CD8-positive, alpha-beta T cell (primary cell): ENCODE measurements at regions of chr17 and their contacts with region 1.

Region 1: DNA sequence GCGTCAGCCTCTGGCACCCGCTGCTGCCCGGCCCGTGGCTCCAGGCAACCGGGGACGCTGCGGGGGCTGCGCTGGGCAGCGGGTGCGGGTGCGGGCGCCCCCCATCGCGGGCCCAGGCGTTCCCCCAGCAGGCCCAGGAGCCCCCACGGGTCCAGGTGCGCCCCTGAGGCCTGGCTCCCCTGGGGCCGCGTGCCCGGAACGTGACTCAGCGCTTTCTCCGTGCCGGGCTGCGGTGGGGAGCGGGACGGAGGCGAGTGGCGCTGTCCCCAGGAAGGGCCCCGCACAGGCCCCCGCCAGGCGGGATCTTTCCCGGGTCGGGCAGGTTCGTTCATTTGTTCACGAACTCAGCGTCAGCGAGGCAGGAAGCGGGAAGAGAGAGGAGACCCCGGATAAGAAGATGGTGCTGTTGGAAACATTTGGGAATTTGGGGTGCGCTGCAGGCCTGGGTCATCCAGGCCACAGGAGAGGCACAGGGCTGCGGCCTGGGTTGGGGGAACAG is 18.4 kb upstream of the EXOC7 start:
- DNase-seq: peak in 3 of 9 experiments; percentile 23 to 63 (median 48)
- ATAC-seq: peak; percentile 10
- H3K4me3 ChIP-seq: peak overlapping the region; percentile 47 to 49
- H3K4me3 Mint-ChIP-seq: peak overlapping the region; percentile 37
- H3K27ac ChIP-seq: peak overlapping the region in 1 of 2 experiments; percentile 27
- H3K27ac Mint-ChIP-seq: no peak overlapping the region
- H3K4me1 ChIP-seq: peaks cover 33% of the 10 kb centered on the region
- H3K4me1 Mint-ChIP-seq: peaks cover 20% of the 10 kb centered on the region
- H3K27me3 ChIP-seq: no peaks in the 10 kb centered on the region
- H3K27me3 Mint-ChIP-seq: no peaks in the 10 kb centered on the region
- CTCF ChIP-seq: no peak

Region 2: DNA sequence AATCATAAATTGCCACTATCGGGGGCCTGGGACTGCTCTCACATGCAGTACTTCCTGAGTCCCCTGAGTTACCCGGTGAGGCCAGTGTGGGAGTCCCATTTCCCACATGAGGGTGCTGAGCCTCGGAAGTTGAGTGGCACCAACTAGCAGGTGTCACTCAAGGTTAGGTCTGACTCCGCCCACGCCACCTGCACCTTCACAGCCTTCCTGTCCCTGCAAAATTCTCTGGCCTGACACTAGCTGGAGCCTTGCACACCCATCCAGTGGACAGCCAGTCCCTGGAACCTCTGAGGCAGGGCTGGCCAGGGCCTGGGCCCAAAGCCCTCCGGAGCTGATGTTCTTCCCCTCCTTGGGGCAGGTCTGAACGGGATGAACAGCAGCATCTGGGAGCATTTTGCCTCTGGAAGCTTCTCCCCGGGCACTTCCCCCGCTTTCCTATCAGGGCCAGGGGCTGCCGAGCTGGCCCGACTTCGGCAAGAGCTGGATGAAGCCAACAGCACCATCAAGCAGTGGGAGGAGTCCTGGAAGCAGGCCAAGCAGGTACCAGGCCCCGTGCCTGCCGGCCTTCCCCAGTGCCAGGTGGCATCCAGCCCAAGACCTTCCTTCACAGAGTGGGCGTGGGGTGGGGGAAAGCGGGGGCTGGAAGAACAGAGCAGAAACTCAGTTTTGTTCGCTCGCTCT is 299.7 kb before region 1 on chr17:
- CTCF ChIA-PET with region 1: no interaction called
- POLR2A ChIA-PET with region 1: no interaction called
- intact Hi-C with region 1: no loop called
- DNase-seq: peak in 8 of 9 experiments; percentile 17 to 68 (median 52)
- ATAC-seq: peak; percentile 90
- H3K4me3 ChIP-seq: no peak overlapping the region
- H3K4me3 Mint-ChIP-seq: peak overlapping the region; percentile 31
- H3K27ac ChIP-seq: peak overlapping the region; percentile 8 to 53
- H3K27ac Mint-ChIP-seq: peak overlapping the region; percentile 83
- H3K4me1 ChIP-seq: peaks cover 27% of the 10 kb centered on the region
- H3K4me1 Mint-ChIP-seq: peaks cover 24% of the 10 kb centered on the region
- H3K27me3 ChIP-seq: no peaks in the 10 kb centered on the region
- H3K27me3 Mint-ChIP-seq: no peaks in the 10 kb centered on the region
- CTCF ChIP-seq: no peak

Region 3: DNA sequence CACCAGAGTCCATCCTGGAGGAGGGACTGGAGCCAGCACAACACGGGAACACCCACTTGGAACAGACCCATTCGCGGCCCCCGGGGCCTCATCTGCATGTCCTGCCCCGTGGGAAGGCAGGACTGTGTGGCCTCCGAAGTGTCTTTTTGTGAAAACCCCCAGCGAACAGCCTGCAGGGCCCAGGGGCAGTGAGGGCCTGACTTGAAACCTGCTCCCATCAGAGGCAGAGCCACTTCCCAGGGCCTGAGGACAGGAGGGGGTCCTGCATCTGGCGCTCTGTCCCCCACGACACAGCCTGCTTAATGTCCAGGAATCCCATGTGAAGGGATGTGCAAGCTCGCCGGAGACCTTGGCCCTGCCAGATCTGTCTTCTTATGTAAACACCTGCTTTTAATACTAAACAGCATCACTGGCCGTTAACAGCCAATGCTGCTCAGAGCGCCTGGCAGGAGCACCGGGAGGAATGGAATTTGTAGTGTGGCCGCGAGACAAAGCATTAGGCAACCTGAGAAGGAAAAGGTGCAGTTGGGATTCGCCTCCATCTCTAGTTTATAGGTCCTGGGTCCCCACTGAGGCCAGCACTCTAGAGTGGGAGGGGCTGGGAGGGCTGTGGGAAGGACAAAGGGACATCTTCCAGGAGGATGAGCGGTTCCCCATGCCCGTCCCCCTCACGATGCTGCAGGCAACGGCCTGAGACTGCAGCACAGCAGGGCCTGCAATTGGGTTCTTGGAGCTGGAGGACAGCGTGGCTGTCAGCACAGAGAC is 85.3 kb before region 1 on chr17:
- CTCF ChIA-PET with region 1: no interaction called
- POLR2A ChIA-PET with region 1: no interaction called
- intact Hi-C with region 1: no loop called
- DNase-seq: no peak
- ATAC-seq: no peak
- H3K4me3 ChIP-seq: no peak overlapping the region
- H3K4me3 Mint-ChIP-seq: no peak overlapping the region
- H3K27ac ChIP-seq: no peak overlapping the region
- H3K27ac Mint-ChIP-seq: peak overlapping the region; percentile 37
- H3K4me1 ChIP-seq: peaks cover 16% of the 10 kb centered on the region
- H3K4me1 Mint-ChIP-seq: peaks cover 27% of the 10 kb centered on the region
- H3K27me3 ChIP-seq: no peaks in the 10 kb centered on the region
- H3K27me3 Mint-ChIP-seq: no peaks in the 10 kb centered on the region
- CTCF ChIP-seq: no peak

Region 4: DNA sequence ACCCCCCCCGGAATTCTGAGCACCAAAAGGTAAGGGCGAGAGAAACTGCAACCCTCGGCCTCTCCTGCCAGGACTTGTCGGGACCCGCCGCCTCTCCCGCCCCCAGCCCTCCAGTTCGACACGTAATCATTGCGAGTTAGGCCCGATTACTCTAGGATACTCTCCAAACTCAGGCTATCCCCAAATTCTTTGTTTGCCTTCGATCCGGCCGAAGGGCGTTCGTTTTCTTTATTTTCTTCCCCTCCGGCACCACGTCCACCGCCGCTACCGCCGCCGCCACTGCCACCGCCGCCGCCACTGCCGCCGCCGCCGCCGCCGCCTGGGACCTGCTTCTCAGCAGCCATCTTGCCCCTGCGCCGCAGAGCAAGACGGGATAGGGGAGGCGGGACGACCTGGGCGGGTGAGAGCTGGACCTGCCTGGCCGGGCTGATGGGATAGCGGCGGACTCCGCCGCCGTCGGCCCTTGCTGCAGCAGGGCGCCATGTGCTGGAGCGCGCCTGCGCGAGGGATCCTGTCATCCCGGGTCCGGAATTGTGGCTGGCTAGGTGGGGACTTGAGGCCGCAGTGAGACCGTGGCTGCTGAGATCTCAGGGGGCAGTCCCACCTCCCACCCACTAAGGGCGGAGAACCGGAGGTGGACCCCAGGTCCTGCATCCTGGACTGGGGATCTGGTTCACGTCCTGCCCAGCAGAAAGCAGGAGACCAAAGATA is 49.7 kb before region 1 on chr17 and contains the start of gene SRP68:
- CTCF ChIA-PET with region 1: no interaction called
- POLR2A ChIA-PET with region 1: no interaction called
- intact Hi-C with region 1: no loop called
- DNase-seq: peak; percentile 63 to 91 (median 83)
- ATAC-seq: peak; percentile 82
- H3K4me3 ChIP-seq: peak within 1 kb of the TSS; percentile 86 to 98
- H3K4me3 Mint-ChIP-seq: peak within 1 kb of the TSS; percentile 96
- H3K27ac ChIP-seq: peak within 1 kb of the TSS; percentile 77 to 81
- H3K27ac Mint-ChIP-seq: peak within 1 kb of the TSS; percentile 95
- H3K4me1 ChIP-seq: peaks cover 44% of the 10 kb centered on the region
- H3K4me1 Mint-ChIP-seq: peaks cover 53% of the 10 kb centered on the region
- H3K27me3 ChIP-seq: peaks cover 18 to 28% of the 10 kb centered on the region in 2 experiments
- H3K27me3 Mint-ChIP-seq: peaks cover 19% of the 10 kb centered on the region
- CTCF ChIP-seq: no peak
- total RNA-seq, gene SRP68: 93.6 to 99.9 TPM

Region 5: GRCh38 chr17:76132574-76133338 is 10.8 kb after region 1 on chr17:
- CTCF ChIA-PET with region 1: interaction called, 13 read pairs
- POLR2A ChIA-PET with region 1: interaction called, 4 read pairs
- intact Hi-C with region 1: no loop called
- DNase-seq: no peak
- ATAC-seq: no peak
- H3K4me3 ChIP-seq: no peak overlapping the region
- H3K4me3 Mint-ChIP-seq: no peak overlapping the region
- H3K27ac ChIP-seq: no peak overlapping the region
- H3K27ac Mint-ChIP-seq: no peak overlapping the region
- H3K4me1 ChIP-seq: peaks cover 27% of the 10 kb centered on the region
- H3K4me1 Mint-ChIP-seq: peaks cover 29% of the 10 kb centered on the region
- H3K27me3 ChIP-seq: no peaks in the 10 kb centered on the region
- H3K27me3 Mint-ChIP-seq: no peaks in the 10 kb centered on the region
- CTCF ChIP-seq: no peak

Region 6: DNA sequence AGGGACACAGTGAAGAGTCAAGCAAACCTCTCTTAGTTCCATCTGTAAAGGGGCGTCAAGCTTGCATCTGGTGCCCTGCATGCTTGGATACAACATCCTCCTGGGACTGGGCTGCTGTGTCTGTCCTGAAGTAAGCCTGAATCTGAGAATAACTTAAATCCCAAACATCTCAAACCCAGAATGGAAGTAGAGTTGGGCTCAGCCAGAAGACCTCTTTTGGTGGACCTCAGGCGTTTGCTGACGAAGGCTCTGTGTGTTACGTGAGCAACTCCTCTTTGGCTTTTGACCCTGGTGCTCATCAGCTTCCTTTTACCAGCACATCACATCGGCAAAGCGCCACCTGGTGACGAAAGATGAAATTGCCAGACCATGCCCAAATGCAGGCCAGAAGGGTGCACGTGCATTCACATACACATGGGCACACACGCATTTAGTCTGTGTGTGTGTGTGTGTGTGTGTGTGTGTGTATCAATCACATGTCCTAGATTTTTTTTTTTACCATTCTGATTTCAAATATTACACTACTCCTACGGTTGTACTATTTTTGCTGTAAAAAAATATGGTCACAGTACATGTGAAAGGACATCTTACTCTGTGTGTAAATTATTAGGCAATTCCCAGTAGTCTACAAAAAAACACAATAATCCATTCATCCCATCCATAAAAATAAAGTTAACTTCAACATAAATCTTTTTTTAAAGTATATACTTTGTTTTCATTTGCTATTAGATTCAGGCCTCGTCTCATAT is 60.2 kb after region 1 on chr17:
- CTCF ChIA-PET with region 1: interaction called, 177 read pairs
- POLR2A ChIA-PET with region 1: interaction called, 19 read pairs
- intact Hi-C with region 1: loop called (anchors 1 kb)
- DNase-seq: peak; percentile 90 to 98 (median 93)
- ATAC-seq: peak; percentile 77
- H3K4me3 ChIP-seq: no peak overlapping the region
- H3K4me3 Mint-ChIP-seq: peak overlapping the region; percentile 64
- H3K27ac ChIP-seq: peak overlapping the region; percentile 42 to 46
- H3K27ac Mint-ChIP-seq: peak overlapping the region; percentile 95
- H3K4me1 ChIP-seq: peaks cover 73% of the 10 kb centered on the region
- H3K4me1 Mint-ChIP-seq: peaks cover 65% of the 10 kb centered on the region
- H3K27me3 ChIP-seq: no peaks in the 10 kb centered on the region
- H3K27me3 Mint-ChIP-seq: no peaks in the 10 kb centered on the region
- CTCF ChIP-seq: peak; percentile 69

Region 7: GRCh38 chr17:76240461-76241203 is 118.7 kb after region 1 on chr17 and contains the start of gene RNF157:
- CTCF ChIA-PET with region 1: interaction called, 5 read pairs
- POLR2A ChIA-PET with region 1: interaction called, 4 read pairs
- intact Hi-C with region 1: loop called in 1 of 2 experiments (anchors 5 kb)
- DNase-seq: peak in 8 of 9 experiments; percentile 48 to 87 (median 64)
- ATAC-seq: peak; percentile 88
- H3K4me3 ChIP-seq: peak within 1 kb of the TSS; percentile 61 to 77
- H3K4me3 Mint-ChIP-seq: peak within 1 kb of the TSS; percentile 87
- H3K27ac ChIP-seq: peak within 1 kb of the TSS; percentile 49 to 63
- H3K27ac Mint-ChIP-seq: peak within 1 kb of the TSS; percentile 91
- H3K4me1 ChIP-seq: peaks cover 52% of the 10 kb centered on the region
- H3K4me1 Mint-ChIP-seq: peaks cover 54% of the 10 kb centered on the region
- H3K27me3 ChIP-seq: no peaks in the 10 kb centered on the region
- H3K27me3 Mint-ChIP-seq: no peaks in the 10 kb centered on the region
- CTCF ChIP-seq: no peak
- total RNA-seq, gene RNF157: 22.3 to 25.5 TPM

Region 8: GRCh38 chr17:76296186-76296585 is 174.2 kb after region 1 on chr17:
- CTCF ChIA-PET with region 1: interaction called, 17 read pairs
- POLR2A ChIA-PET with region 1: no interaction called
- intact Hi-C with region 1: loop called (anchors 1 kb)
- DNase-seq: no peak
- ATAC-seq: no peak
- H3K4me3 ChIP-seq: no peak overlapping the region
- H3K4me3 Mint-ChIP-seq: no peak overlapping the region
- H3K27ac ChIP-seq: no peak overlapping the region
- H3K27ac Mint-ChIP-seq: no peak overlapping the region
- H3K4me1 ChIP-seq: no peaks in the 10 kb centered on the region
- H3K4me1 Mint-ChIP-seq: peaks cover 1% of the 10 kb centered on the region
- H3K27me3 ChIP-seq: no peaks in the 10 kb centered on the region
- H3K27me3 Mint-ChIP-seq: no peaks in the 10 kb centered on the region
- CTCF ChIP-seq: no peak